OCI-LY7 (cell line): ENCODE measurements at regions of chr10 and their contacts with region 1.

Region 1: DNA sequence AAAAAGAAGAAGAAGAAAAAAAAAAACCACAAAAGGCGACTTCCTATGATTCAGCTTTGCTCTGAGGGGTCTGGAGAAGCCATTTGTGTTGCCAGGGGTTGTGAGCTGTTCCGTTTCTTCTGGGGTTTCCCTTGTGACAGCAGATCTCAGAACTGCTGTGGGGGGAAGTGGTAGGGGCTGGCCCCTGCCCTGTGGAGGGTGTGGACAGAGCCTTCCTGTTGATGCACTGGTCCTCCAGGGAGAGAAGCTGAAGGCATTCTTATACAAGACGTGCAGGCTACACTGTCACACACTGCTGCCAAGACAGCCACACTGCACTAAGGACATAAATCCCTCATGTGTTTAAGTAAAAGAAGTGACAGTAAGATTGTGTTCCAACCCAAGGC is 17.3 kb upstream of the CSGALNACT2 start:
- DNase-seq: peak; percentile 59
- H3K4me3 ChIP-seq: no peak overlapping the region
- H3K27ac ChIP-seq: no peak overlapping the region
- H3K4me1 ChIP-seq: peaks cover 13% of the 10 kb centered on the region
- CTCF ChIP-seq: no peak

Region 2: DNA sequence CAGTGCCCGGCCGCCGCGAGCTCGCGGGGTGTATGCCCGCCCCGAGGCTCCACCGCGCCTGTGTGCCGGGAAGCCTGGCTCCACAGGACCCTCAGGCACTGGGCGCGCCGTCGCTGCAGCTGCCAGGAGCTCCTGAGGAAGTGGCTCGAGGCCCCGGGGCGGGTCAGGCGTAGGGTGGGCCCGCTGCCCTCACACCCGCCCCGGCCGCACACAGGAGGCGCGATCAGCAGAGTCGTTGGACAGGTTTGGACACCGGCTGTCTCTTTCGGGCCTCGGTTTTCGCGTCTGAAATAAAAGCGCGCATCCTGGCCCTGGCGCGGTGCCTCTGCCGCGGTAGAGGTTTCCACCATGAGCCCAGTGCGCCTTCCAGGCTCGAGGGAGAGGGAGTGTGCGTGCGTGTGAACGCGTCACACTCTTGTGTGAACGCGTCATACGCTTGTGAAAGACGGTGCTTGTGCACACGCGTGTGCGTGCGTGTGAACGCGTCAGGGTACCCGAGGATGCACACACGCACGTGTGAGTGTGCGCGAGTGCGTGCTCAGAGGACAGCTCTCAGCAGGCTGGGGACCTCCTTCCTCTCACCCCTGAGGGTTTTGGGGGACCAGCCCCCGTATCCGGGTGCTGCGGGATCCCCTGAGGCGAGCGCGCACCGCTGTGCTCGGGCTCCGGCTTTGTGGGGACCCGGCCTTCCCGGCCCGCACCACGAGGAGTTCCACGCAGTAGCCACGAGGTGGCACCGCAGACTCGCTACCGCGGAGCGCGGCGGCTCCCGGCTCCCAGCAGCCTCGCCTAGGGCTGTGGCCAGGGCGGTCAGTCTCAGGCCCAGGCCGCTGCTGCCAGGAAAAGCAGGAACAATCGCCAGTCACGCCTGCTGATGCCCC is 254.6 kb before region 1 on chr10:
- CTCF ChIA-PET with region 1: no interaction called
- POLR2A ChIA-PET with region 1: no interaction called
- intact Hi-C with region 1: no loop called
- DNase-seq: peak; percentile 66
- H3K4me3 ChIP-seq: no peak overlapping the region
- H3K27ac ChIP-seq: no peak overlapping the region
- H3K4me1 ChIP-seq: peaks cover 4% of the 10 kb centered on the region
- CTCF ChIP-seq: peak; percentile 74

Region 3: DNA sequence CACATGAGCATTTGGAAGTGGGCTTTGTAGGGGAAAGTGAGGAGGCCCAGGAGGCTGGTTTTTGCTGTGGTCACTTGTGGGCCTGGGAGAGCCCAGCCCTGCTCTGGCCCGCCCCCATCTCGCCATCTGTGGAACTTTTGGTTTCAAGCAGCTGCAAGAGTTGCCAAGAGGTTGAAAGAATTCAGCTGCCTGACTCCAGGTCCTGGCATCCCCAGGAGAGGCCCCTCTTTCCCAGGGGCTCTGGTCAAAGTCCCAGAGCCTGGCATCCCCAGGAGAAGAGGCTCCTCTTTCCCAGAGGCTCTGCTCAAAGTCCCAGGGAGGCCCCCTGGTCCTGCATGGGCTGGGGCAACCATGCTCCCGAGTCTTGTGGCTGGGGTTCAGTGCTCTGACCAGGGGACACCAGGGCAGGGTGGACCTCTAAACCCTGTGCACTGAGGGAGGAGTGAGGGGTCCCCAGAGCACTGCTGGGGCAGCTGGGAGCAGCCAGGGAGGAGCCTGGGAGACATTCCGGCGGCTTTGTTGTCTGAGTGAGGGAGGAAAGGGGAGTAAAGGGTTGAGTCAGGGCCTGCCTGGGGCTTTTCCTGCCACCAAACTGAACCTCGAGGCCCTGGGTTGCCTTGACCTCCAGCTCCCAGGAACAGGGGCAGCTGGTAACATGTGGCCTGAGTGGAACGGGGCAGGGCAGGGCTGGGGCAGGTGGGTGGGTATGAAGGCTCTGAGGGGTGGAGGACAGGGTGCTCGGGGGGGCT is 10.4 kb before region 1 on chr10:
- CTCF ChIA-PET with region 1: interaction called, 21 read pairs
- POLR2A ChIA-PET with region 1: interaction called, 5 read pairs
- intact Hi-C with region 1: no loop called
- DNase-seq: no peak
- H3K4me3 ChIP-seq: no peak overlapping the region
- H3K27ac ChIP-seq: no peak overlapping the region
- H3K4me1 ChIP-seq: peaks cover 10% of the 10 kb centered on the region
- CTCF ChIP-seq: no peak